ENCODE measurements at regions of chr9 and their contacts with region 1.

Region 1: DNA sequence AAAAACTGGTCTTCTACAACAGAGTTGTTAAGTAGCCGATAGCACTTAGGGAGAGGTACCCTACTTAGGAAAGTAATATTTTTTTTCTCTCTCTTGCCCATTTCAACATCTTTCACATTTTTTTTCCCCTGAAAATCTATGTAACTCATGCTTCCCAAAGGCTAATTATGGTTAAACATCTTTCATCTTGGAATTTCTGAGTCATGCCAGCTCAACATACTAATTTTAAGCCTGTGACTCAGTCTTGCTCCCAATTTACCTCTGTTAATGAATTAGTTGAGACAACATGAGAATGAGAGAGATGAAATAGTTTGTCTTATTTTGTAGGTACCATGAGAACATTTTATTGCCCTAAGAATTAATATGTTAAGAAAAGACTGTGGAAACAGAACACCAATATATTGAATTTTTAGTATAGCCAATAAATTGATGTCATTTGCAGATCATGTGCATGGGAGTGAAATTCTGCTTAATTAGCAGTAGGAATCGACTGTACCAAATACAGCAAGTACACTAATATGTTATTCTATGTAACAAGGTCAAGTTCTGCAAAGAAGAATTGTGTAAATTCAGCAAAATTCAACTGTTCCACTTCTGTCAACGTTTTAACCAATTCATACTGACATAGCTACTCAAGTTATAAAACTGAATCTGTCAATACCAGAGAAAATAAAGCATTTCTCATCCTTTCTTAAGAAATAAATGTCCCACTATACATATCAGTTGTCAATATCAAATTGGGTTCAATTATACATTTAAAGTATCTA is 550.0 kb downstream of the PTPRD start:
- DNase-seq: no peak

Region 2: DNA sequence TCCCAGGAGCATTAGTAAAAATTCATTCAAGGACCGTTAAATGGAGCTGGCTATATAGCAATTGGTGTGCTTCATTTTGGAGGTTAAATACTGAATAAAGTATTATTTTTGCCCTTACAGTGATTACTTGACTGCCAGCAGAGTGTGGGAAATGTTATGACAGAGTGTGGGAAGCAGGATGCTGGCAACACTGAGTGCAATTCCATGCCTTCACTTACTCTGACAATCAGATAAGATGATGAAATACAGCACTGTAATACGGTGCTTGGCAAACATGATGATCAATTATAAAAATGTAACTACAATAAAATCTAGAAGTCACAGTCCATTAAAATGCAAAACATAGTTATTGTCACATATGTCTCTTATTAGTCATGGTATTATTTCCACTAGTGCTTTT is 101.3 kb before region 1 on chr9:
- intact Hi-C with region 1: no loop called
- DNase-seq: no peak

Region 3: DNA sequence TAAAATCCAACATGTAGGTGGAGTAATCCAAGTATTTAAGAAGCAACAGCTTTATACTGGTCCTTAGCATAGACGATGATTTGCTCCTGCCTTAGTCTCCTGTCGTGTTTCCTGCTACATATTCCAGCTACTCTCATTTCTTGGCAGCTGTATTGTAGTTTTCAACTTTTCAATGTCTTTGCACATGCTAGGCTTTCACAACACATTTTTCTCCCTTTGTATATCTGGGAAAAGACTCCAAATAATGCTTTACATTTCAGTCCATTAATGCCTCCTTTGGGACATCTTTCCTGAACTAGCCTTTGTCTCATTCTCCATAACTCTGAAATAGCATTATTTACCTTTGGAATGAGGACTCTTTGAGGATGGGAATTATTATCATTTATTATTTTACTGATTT is 42.0 kb after region 1 on chr9:
- intact Hi-C with region 1: no loop called
- DNase-seq: no peak

Region 4: DNA sequence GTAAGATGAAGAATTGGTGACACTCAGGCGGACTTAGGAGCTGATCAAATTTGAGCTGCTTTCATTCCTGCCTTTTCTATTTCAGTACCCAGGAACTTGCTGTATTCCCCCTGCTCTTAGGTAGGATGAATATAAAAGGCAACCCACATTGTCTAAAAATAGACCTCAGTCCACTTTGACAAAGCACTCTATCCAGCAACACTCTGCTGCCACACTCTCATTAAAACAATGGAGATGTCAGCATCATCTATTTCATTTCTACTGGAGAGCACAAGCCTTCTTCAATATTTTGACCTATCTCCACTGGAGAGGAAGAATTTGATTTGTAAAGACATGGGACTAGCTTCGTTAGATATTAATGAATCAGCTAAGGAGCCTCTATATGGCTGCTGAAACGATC is 81.5 kb after region 1 on chr9:
- intact Hi-C with region 1: no loop called
- DNase-seq: no peak

Region 5: GRCh38 chr9:10268531-10269485 is 206.0 kb after region 1 on chr9:
- intact Hi-C with region 1: loop called (anchors 5 kb)
- DNase-seq: peak in 5 of 10 donors; percentile 10 to 59 (median 43)

Measured in posterior cingulate gyrus (tissue), 11 donors.